ENCODE measurements at regions of chr2 and their contacts with region 1.

Region 1: DNA sequence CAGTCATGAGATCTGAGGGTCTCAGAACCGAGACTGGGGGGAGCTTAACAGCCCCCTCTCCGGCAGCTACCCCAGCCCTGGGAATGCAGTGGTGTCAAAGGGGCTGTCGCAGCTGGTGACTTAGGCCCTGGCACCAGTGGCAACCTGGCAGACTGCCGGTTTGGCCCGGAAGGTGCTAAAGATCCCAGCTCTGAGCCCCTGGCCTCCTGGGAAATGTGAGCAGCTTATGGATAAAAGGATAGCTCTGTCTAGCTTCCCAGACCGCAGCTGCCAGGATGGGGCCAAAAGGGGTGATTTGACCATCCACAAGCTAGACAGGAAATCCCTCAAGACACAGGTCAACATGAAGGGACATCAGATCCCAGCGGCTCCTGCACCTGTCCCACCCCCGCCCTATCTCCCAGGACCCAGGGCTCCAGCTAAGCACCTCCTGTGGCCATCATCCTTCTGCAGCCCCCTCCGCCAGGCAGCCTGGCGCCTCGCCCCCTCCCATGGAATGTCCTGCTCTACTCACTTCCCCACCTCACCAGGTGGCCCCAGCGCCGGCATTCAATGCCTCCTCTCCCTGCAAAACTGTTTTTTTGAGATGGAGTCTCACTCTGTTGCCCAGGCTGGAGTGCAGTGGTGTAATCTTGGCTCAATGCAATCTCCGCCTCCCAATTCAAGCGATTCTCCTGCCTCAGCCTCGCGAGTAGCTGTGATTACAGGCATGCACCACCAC is 33.2 kb upstream of the EFHD1 start:
- DNase-seq: no peak
- H3K4me3 ChIP-seq: no peak overlapping the region
- H3K27ac ChIP-seq: no peak overlapping the region
- H3K4me1 ChIP-seq: no peaks in the 10 kb centered on the region
- H3K27me3 ChIP-seq: no peaks in the 10 kb centered on the region
- CTCF ChIP-seq: no peak
- EP300 ChIP-seq: no peak
- POLR2A ChIP-seq: no peak

Region 2: DNA sequence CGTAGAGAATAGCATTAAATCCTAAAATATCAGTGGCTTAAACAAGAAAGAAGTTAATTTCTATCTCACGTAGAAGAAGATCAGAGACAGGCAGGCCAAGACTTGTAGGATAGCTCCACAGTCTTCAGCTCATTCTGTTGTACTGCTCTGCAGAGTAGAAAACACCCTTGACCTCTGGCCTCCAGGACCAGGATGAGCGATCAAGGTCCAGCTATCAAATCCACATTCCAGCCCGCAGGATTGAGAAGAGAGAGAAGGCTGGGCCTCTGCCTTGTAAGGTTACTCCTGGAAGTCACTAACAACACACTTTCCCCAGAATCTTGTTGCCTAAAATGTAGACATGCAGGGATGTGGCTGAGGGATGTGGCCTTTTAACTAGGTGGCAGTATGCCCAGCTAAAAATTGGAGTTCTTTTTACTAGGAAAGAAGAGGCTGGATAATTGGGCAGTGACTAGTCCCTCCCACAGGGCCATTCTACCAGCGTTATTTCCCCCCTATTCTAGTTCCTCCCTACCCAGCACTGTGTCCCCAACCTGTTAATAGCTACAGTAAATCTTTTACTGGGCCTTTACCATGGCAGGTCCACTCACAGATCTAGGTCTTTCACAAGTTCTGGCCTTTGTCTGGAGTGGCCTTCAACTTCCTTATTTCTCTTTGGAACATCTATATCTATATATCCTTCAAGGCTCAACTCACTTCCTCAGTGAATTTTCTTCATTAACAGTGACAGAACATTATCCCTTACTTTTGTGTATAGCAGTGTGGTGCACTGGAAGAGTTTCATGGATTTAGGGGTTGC is 473.7 kb before region 1 on chr2:
- intact Hi-C with region 1: no loop called
- DNase-seq: no peak
- H3K4me3 ChIP-seq: no peak overlapping the region
- H3K27ac ChIP-seq: no peak overlapping the region
- H3K4me1 ChIP-seq: peaks cover 0 to 5% (median 0%) of the 10 kb centered on the region in 4 donors
- H3K27me3 ChIP-seq: no peaks in the 10 kb centered on the region
- CTCF ChIP-seq: no peak
- EP300 ChIP-seq: no peak
- POLR2A ChIP-seq: no peak

Region 3: GRCh38 chr2:232658196-232658785 is 58.1 kb after region 1 on chr2:
- intact Hi-C with region 1: no loop called
- DNase-seq: no peak
- H3K4me3 ChIP-seq: no peak overlapping the region
- H3K27ac ChIP-seq: no peak overlapping the region
- H3K4me1 ChIP-seq: no peaks in the 10 kb centered on the region
- H3K27me3 ChIP-seq: no peaks in the 10 kb centered on the region
- CTCF ChIP-seq: no peak
- EP300 ChIP-seq: no peak
- POLR2A ChIP-seq: no peak

Region 4: DNA sequence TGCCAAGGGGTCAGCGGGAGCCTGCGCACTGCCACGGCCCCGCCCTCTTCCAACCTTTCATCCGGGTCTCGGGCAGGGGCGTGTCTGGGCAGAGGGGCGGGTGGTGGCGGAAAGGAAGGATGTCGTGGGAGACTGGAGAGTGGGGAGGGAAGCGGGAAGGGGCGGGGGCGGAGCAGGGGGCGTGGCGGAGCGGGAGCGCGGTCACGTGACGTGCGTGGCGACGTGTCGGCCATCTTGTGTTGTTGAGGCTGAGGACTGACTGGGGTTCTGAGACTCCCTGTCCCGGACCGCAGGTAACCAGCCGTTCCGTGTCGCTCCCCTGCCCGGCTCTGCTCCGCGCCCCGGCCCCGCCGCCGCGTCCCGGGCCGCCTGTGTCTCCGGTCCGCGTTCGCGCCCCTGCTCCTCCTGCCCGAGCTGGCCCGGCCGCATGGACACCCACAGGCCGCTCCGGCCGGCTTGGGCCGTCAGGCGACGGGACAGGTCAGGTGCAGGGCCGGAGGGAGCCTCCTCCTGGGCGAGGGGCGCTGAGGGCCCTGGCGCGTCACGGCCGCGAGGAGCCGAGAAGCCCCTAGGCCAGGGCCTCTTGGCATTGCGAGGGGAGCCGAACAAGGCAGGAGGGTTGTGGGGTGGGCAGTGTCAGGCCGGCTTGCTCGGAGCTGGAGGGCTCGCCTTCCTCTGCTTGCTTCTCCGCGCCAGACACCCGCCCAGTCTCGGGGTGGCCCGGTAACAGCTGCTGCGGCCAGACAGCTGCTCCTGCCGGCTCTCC is 97.1 kb after region 1 on chr2 and contains the start of gene GIGYF2:
- intact Hi-C with region 1: loop called (anchors 10 kb)
- DNase-seq: peak; percentile 100
- H3K4me3 ChIP-seq: peak within 1 kb of the TSS; percentile 84 to 99 (median 97)
- H3K27ac ChIP-seq: peak within 1 kb of the TSS; percentile 95 to 99 (median 98)
- H3K4me1 ChIP-seq: peaks cover 34 to 50% (median 44%) of the 10 kb centered on the region in 4 donors
- H3K27me3 ChIP-seq: no peaks in the 10 kb centered on the region
- CTCF ChIP-seq: peak in 1 of 3 experiments; percentile 14
- EP300 ChIP-seq: no peak
- POLR2A ChIP-seq: no peak
- total RNA-seq, gene GIGYF2: 54.2 to 64.7 (median 59.9) TPM

Region 5: DNA sequence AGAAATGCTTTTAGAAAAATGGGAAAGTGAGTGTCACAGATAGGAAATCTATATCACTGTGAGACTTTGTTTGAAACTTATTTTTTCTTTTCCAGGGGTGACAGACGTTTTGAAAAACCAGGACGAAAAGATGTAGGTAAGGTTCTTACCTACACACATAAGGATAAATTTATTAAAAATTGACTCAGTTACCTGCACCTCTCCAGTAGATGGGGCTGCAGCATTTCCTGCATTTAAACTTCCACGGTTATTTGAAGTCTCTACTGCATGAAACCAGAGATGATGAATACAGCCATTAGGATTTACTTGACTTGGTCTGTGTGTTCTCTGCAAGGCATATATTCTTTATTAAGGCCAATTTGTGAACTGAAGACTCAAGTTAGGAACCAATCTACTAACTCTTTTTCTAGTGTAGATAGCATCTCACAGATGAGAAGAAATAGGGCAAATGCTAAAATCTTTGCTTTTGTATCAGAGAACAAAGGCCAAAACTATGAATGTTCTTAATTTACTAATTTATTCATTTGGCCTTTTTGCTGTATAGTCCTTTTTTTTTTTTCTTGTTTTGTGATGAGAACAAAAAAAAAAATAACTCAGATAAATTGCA is 161.2 kb after region 1 on chr2:
- intact Hi-C with region 1: no loop called
- DNase-seq: no peak
- H3K4me3 ChIP-seq: no peak overlapping the region
- H3K27ac ChIP-seq: no peak overlapping the region
- H3K4me1 ChIP-seq: no peaks in the 10 kb centered on the region
- H3K27me3 ChIP-seq: no peaks in the 10 kb centered on the region
- CTCF ChIP-seq: peak in 2 of 3 experiments; percentile 6 to 37
- EP300 ChIP-seq: no peak
- POLR2A ChIP-seq: no peak

Region 6: GRCh38 chr2:233053928-233054784 is 453.9 kb after region 1 on chr2:
- intact Hi-C with region 1: loop called (anchors 10 kb)
- DNase-seq: no peak
- H3K4me3 ChIP-seq: no peak overlapping the region
- H3K27ac ChIP-seq: no peak overlapping the region
- H3K4me1 ChIP-seq: peaks cover 1 to 12% (median 4%) of the 10 kb centered on the region in 4 donors
- H3K27me3 ChIP-seq: peaks cover 0 to 40% (median 2%) of the 10 kb centered on the region in 4 donors
- CTCF ChIP-seq: peak; percentile 47 to 77 (median 72)
- EP300 ChIP-seq: no peak
- POLR2A ChIP-seq: no peak